ENCODE measurements at regions of chr1 and their contacts with region 1.

Region 1: GRCh38 chr1:22416555-22417454 is 34.8 kb upstream of the ZBTB40 start:
- DNase-seq: peak; percentile 84
- CTCF ChIP-seq: peak; percentile 80

Region 2: GRCh38 chr1:22131875-22132486 is 284.8 kb before region 1 on chr1:
- in situ Hi-C with region 1: loop called (anchors 10 kb)
- DNase-seq: peak; percentile 91
- CTCF ChIP-seq: peak; percentile 93